ENCODE measurements at regions of chr15 and their contacts with region 1.

Region 1: GRCh38 chr15:22980189-22981050 is at the start of gene CYFIP1:
- DNase-seq: no peak
- ATAC-seq: peak; percentile 95
- H3K4me3 ChIP-seq: peak within 1 kb of the TSS; percentile 77 to 100
- H3K27ac ChIP-seq: peak within 1 kb of the TSS; percentile 77
- H3K4me1 ChIP-seq: 0 out of 2 replicates have a peak, but pooled peaks cover 6% of the 10 kb centered on the region
- H3K27me3 ChIP-seq: no peaks in the 10 kb centered on the region
- CTCF ChIP-seq: no peak
- total RNA-seq, gene CYFIP1: 159 TPM

Region 2: GRCh38 chr15:22780267-22780666 is 200.2 kb before region 1 on chr15:
- CTCF ChIA-PET with region 1: no interaction called
- POLR2A ChIA-PET with region 1: no interaction called
- in situ Hi-C with region 1: no loop called
- intact Hi-C with region 1: no loop called
- DNase-seq: no peak
- ATAC-seq: no peak
- H3K4me3 ChIP-seq: no peak overlapping the region
- H3K27ac ChIP-seq: no peak overlapping the region
- H3K4me1 ChIP-seq: peaks cover 9% of the 10 kb centered on the region
- H3K27me3 ChIP-seq: no peaks in the 10 kb centered on the region
- CTCF ChIP-seq: no peak

Region 3: DNA sequence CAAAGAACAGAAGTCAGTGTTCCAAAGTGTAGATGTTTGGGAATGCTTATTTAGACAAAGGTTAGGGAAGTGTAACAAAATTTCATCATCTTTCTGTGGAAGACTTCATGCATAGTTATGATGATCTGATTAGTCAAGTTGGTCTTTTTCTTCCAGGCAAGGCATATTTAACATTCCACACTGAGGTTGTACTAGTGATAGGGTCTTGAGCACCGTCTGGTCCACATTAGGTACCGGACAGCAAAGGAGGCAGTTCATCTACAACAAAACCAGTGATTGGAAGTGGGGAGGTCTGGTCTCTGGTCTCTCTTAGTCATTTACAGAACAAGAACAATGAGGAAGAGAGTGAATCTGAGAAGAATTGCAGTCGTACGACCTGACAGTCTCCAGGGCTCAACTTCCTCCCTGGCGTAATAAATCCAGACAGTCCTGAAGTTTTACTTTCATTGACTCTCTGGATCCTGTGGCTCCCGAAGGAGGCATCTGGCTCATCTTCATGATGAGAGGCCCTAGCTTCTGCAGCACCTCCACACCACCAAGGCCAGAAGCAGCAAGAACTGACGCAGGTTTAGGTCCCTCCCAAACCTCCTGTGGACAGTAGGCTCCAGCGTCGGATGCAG is 11.4 kb after region 1 on chr15:
- CTCF ChIA-PET with region 1: no interaction called
- POLR2A ChIA-PET with region 1: no interaction called
- in situ Hi-C with region 1: no loop called
- intact Hi-C with region 1: no loop called
- DNase-seq: no peak
- ATAC-seq: no peak
- H3K4me3 ChIP-seq: no peak overlapping the region
- H3K27ac ChIP-seq: no peak overlapping the region
- H3K4me1 ChIP-seq: no peaks in the 10 kb centered on the region
- H3K27me3 ChIP-seq: no peaks in the 10 kb centered on the region
- CTCF ChIP-seq: no peak

Region 4: DNA sequence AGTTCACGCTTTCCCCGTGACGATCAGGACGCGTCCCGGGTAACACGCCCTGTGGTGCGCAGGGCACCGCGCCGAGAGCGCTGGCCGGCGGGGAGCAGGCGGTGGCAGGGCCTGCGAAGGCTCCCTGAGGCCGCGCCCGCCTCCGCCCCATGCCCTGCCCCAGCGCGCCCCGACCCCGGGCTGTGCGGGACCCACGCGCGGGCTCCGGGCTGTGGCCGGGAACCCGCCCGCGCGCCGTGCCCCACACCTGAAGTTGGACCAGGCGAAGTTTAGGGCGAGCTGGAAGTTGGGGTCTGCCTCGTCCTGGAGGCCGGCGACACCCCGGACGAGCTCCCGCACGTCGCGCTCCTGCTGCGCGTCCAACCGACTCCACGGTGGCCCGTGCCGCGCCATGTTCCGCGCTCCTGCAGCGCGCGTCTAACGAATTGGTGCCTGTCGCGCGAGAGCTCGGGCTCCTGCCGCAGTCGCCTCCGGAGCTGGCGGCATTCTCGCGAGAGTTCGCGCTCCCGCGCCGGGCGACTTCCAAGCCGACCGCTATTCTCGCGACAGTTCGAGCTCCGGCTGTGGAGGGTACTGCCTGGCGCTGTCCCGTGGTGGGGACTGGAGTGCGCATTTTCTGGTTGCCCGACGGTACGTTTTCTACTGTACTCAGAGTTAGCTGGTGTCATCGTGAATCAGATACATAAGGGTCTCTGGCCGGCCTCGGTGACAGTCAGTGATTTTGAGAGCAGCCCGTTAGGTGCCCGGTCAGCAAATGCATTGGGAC is 58.9 kb after region 1 on chr15 and contains the start of gene TUBGCP5:
- CTCF ChIA-PET with region 1: no interaction called
- POLR2A ChIA-PET with region 1: no interaction called
- in situ Hi-C with region 1: no loop called
- intact Hi-C with region 1: loop called (anchors 10 kb)
- DNase-seq: peak; percentile 75
- ATAC-seq: peak; percentile 99
- H3K4me3 ChIP-seq: peak within 1 kb of the TSS; percentile 65 to 97
- H3K27ac ChIP-seq: peak within 1 kb of the TSS; percentile 93
- H3K4me1 ChIP-seq: peaks cover 7% of the 10 kb centered on the region; the same call in 1 of the 2 replicates
- H3K27me3 ChIP-seq: no peaks in the 10 kb centered on the region
- CTCF ChIP-seq: peak; percentile 21; the same call in 1 of the 2 replicates
- total RNA-seq, gene TUBGCP5: 23.3 TPM

Region 5: GRCh38 chr15:23532019-23532418 is 551.6 kb after region 1 on chr15:
- CTCF ChIA-PET with region 1: no interaction called
- POLR2A ChIA-PET with region 1: no interaction called
- in situ Hi-C with region 1: no loop called
- intact Hi-C with region 1: no loop called
- DNase-seq: peak; percentile 20
- ATAC-seq: no peak
- H3K4me3 ChIP-seq: peak overlapping the region in 1 of 2 experiments; percentile 1; a peak in 1 of 4 replicates
- H3K27ac ChIP-seq: no peak overlapping the region
- H3K4me1 ChIP-seq: no peaks in the 10 kb centered on the region
- H3K27me3 ChIP-seq: peaks cover 13% of the 10 kb centered on the region
- CTCF ChIP-seq: no peak

Measured in Panc1 (cell line).